GM12878 (cell line): ENCODE measurements at regions of chr7 and their contacts with region 1.

Region 1: DNA sequence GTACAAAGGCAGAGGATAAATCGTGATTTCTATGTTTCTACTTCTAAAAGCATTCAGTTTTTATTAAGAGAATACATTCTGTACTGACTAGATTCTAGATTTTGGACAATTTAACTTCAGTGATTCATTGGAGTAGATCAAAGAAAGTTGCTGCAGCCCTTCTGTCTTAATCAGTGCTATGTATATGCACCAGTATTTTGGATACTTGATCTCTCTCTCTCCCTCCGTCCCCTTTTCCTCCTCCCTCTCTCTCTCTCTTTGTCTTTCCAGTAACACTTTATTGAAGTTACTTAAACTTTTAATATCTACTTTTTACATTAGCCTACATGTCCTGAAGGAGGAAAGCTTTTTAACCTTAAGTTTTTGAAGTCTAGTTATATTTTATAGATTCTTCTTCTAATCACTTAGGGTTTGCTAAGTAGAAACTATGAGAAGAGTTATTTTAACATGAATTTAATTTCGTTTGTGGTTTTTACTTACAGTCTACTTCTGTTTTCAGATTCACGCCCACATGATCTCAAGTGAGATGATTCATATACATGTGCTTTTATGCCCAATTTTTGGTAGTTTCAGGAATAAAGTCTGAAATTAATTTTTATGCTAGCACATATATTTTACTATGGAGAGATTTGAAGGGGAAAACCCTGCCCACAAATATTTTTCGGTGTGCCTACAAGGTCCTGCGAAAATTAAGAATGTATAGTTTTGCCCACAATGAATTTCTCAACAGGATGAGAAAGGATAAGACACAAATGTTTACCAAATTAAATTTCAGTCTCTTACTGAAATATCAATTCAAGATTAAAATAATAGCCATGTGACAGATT is 9.1 kb downstream of the MDFIC start:
- DNase-seq: no peak
- ATAC-seq: peak; percentile 49
- H3K4me3 ChIP-seq: peak overlapping the region; percentile 62
- H3K27ac ChIP-seq: peak overlapping the region; percentile 92
- H3K4me1 ChIP-seq: peaks cover 26% of the 10 kb centered on the region
- H3K27me3 ChIP-seq: no peaks in the 10 kb centered on the region
- CTCF ChIP-seq: no peak
- EP300 ChIP-seq: peak in 1 of 2 experiments; percentile 73; a peak in 2 of 4 replicates
- POLR2A ChIP-seq: no peak
- RAD21 ChIP-seq: no peak

Region 2: DNA sequence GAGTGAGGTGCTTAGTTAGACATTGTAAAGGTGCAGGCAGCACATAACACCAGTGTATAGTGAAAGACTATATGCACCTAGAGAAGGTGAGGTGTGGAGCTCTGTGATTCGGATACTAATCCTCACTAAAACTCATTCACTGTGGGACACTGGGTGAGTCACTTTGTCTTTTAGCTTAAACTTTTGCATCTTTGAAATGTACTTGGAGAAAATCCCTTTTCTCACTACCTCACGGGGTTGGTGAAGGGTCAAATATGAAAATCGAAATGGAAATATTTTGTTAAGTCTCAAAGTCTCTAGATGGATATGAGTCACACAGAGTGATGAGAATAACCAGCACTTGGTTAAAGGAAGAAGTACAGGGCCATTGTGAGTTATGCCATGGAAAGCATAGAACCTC is 28.9 kb after region 1 on chr7:
- CTCF ChIA-PET with region 1: interaction called, 3 read pairs
- POLR2A ChIA-PET with region 1: no interaction called
- RAD21 ChIA-PET with region 1: interaction called, 6 read pairs
- SMC1A ChIA-PET with region 1: interaction called, 11 read pairs
- in situ Hi-C with region 1: no loop called
- intact Hi-C with region 1: no loop called
- DNase-seq: peak; percentile 38
- ATAC-seq: peak; percentile 83
- H3K4me3 ChIP-seq: peak overlapping the region; percentile 10; the same call in 1 of the 2 replicates
- H3K27ac ChIP-seq: no peak overlapping the region
- H3K4me1 ChIP-seq: peaks cover 12% of the 10 kb centered on the region; the same call in 1 of the 2 replicates
- H3K27me3 ChIP-seq: no peaks in the 10 kb centered on the region
- CTCF ChIP-seq: no peak
- EP300 ChIP-seq: no peak
- POLR2A ChIP-seq: no peak
- RAD21 ChIP-seq: no peak